ENCODE measurements at regions of chr3 and their contacts with region 1.

Region 1: DNA sequence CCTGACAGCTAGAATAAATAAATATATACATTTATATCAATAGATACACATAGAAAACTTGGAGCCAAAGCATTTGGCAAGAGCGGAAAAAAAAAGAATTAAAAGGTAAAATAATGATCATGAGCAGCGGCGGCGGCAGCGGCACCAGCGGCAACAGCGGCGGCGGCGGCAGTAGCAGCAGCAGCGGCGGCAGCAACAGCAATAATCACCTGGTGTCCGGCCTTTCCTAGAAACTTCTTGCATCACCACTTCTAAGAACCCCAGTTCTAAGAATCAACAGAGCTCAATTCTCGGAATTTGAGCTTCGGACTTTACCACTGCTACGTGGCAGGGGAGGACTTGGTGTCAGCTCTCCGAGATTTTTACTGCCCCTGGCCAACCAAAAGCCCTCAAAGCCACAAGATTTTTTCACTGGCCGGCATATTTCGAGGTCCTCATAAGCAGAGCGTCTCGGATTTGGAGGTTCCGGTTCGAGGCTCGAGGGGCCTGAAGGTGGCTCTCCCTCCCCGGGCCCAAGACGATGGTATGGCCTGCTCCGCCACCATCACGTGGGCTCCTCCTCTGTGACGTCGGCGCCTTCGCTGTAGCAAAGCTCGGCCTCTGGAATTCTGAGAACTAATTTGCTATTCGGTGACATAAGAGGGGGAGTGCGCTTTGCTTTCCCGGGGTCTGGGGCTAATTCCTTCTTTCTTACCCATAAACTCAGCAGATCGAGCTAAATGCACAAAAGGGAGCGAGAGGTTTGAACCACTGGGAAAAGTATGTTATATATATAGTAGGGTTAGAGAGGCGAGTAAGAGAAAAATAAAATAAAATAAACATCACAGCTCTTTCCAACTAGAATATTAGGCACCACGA is at the start of gene BCL6:
- DNase-seq: peak; percentile 94
- ATAC-seq: peak; percentile 71 to 80
- total RNA-seq, gene BCL6: 91.7 to 113 TPM

Region 2: GRCh38 chr3:187519428-187519890 is 226.0 kb before region 1 on chr3:
- intact Hi-C with region 1: no loop called
- DNase-seq: no peak
- ATAC-seq: no peak

Region 3: DNA sequence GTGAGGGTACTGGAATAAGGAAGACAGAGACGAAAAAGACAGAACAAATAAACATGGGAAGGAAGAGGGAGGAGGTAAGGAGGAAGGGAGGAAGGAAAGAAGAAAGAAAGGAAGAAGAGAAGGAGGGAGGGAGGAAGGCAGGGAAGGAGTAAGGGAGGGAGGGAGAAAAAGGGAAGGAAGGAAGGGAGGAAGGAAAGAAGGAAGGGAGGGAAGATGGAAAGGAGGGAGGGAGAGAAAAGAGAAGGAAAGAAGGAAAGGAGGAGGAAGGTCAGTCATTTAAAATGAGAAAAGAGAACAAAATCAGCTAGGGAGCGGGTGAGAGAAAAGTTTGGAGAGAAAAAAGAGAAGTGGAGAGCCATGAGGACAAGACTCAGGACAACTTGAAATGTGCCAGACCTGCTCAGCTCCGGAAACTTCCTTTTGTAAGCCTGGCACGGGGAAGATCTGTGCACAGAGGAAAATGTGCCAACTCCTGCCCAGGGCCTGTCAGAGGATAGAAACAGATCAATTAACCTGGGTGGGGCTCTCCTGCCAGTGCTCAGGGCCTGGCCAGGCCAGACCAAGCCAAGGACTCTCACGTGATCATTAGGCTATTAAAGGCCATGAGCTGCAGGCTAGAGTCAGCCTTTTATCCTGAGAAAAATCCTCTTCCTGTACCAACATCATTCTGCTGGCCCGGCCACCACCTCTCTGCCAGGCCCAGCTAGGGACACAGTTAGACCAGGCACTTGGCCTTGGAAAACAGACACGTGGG is 50.0 kb after region 1 on chr3:
- intact Hi-C with region 1: no loop called
- DNase-seq: no peak
- ATAC-seq: peak in 1 of 2 donors; percentile 11

Region 4: GRCh38 chr3:187858041-187858440 is 112.6 kb after region 1 on chr3:
- intact Hi-C with region 1: loop called in 1 of 2 experiments (anchors 5 kb)
- DNase-seq: no peak
- ATAC-seq: peak; percentile 78 to 86

Region 5: DNA sequence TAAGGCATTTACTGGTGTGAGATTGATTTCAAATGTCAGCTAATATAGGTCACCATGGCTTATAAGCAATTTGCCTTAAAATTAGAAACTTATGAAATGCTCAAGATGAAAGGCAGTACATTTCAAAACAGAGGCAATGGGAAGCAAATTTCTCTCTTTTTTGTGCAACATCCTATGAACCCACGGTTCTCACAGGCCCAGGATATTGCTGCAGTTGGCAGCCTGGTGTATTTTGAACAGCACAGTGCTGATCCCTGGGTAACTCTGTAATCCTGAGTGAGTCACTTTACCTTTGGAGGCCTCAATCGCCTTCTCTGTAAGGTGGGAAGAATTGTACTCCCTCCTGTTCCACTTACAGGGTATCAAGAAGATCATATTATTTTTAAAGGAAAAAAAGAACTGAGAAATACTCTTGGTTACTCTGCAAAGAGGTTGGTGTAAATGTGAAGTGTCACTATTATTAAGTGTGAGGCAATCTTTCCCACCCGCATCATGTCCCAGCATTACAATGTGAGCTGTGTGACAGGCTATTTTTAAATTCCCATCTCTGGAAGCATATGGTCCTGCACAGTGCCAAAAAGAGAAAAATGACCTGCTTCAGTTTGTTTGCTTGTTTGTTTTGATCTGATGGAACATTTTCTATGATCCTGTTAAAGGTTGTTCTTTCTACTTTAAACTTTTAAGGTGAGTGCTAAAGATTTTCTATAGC is 218.4 kb after region 1 on chr3:
- intact Hi-C with region 1: loop called in 1 of 2 experiments (anchors 5 kb)
- DNase-seq: no peak
- ATAC-seq: peak; percentile 71 to 84

Region 6: GRCh38 chr3:188052169-188053030 is 307.0 kb after region 1 on chr3:
- intact Hi-C with region 1: loop called in 1 of 2 experiments (anchors 5 kb)
- DNase-seq: peak; percentile 87
- ATAC-seq: peak; percentile 97 to 98

Region 7: DNA sequence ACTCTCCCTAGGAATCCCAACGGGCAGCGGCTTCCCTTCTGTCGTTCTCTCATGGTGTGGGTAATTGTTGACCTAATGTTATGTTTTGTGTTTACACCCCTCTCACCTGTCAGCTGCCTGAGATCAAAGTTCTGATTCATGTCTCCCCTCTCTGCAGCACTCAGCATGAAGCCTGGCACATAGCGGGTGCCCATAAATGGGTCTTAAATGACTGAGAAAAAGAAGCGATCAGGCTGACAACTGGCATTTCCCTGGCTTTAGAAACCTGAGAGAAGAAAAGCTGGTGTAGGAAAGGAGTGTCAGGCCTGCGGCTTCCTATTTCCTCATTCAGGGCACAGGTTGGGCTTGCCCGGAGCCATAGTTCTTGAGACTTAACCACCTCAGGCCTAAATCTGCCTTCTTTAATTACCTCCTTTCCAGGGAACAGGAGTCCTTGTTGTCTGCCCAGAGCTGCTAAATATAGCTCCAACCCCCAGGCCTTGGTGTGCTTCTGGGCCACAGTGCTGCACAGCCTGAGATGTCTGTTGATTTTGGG is 440.4 kb after region 1 on chr3:
- intact Hi-C with region 1: loop called in 1 of 2 experiments (anchors 10 kb)
- DNase-seq: no peak
- ATAC-seq: peak; percentile 49 to 52

Region 8: DNA sequence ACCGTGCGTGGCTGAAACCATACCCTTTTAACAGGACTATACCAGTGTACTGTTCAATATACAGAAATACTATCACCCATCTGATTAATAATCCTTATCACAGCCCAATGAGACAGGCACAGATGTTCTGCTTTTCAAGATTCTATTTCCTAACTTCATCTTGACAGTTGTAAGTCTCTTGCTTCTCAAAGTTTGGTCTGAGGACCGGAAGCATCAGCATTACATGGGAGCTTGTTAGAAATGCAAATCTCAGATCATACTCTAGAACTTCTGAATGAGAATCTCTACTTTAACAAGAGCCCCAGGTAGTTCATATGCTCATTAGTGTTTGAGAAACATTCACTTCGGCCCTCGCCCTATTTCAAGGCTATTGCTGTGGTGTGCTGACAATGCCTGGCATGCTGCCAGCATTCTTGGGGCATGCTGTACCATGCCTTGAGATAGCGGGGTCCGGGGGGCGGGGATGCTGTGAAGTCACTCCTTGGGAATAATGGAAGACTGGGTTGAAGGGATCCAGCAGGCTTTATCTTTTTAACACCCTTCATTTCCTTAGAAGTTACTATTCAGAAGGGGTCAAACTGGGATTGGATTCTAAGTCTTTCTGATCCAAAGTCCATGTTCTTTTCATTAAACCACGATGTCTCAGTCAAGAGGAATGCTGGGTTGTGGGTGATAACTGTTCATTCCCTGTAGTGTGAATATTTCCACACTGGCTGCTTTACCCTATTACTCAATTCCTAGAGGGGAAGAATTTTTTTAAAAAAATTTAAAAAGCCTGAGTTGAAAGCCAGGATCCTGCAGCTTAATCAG is 603.2 kb after region 1 on chr3:
- intact Hi-C with region 1: loop called (anchors 10 kb)
- DNase-seq: peak; percentile 93
- ATAC-seq: peak; percentile 85 to 92

Measured in left cardiac atrium (tissue), 4 donors.